Ovary (tissue), 10 donors: ENCODE measurements at regions of chr12 and their contacts with region 1.

Region 1: DNA sequence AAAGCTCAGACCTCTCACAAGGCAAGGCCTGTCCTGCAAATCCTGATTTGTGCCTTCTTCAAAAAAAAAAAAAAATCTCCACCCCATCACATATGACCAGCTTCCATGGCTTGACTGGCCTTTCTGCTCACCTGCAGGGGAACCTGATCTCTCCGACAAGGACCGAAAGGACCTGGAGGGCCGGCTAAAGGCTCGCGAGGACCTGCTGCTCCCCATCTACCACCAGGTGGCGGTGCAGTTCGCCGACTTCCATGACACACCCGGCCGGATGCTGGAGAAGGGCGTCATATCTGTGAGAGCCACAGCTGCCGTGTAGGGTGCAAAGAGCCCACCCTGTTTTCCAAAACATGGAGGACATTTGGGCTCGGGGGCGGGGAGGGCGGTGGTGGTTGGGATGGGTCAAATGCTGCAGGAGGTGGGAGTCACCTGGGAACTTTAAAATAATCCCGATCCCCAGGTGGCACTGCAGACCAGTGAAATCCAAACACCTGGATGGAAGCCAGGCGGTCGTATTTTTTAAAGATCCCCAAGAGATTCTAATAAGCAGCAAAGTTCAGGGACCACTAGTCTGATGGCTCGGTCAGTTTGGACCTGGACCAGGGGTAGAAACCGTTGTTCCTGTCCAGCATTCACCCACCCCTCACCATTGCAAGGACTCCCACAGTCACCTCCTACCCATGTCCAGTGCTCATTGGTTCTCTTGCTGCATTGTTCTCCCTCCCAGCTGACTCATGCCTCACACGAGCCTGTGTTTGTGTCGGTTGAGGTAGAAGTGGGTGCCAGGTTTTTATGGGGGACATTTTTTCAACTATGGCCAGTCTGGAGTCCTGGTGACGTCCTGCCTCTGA is 44.8 kb downstream of the FOXN4 start:
- DNase-seq: peak; percentile 62 to 87 (median 77)
- H3K4me3 ChIP-seq: no peak overlapping the region
- H3K27ac ChIP-seq: no peak overlapping the region
- H3K4me1 ChIP-seq: no peaks in the 10 kb centered on the region
- H3K27me3 ChIP-seq: no peaks in the 10 kb centered on the region
- CTCF ChIP-seq: peak in 2 of 3 donors; percentile 51 to 65
- EP300 ChIP-seq: no peak
- POLR2A ChIP-seq: no peak

Region 2: DNA sequence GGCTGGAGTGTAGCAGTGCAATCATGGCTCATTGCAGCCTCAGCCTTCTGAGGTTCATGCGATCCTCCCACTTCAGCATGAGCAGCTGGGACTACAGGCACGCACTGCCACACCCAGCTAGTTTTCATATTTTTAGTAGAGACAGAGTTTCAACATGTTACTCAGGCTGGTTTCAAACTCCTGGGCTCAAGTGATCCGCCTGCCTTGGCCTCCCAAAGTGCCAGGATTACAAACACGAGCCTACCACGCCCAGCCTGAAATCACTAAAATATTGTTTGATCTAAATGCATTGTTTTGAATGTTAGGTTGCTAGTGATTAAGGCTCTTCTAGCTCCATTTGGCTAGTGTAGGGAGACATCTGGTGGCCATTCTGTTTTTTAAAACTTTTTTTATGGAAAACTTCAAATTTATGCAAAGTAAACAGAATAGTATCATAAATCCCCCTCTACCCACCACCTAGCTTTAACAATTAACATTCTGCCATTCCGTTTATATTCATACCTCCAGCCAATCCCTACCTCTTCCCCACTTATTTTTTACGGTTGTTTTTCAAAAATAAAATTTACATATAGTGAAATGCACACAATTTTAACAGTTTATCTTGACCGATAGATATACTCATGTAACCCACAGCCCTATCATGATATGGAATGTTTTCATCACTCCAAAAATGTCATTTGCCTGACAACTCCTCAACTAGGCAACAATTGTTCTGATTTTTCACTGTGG is 121.2 kb after region 1 on chr12:
- intact Hi-C with region 1: loop called (anchors 5 kb)
- DNase-seq: peak in 3 of 5 donors; percentile 19 to 54 (median 26)
- H3K4me3 ChIP-seq: no peak overlapping the region
- H3K27ac ChIP-seq: no peak overlapping the region
- H3K4me1 ChIP-seq: peaks cover 3% of the 10 kb centered on the region
- H3K27me3 ChIP-seq: no peaks in the 10 kb centered on the region
- CTCF ChIP-seq: peak in 2 of 3 donors; percentile 55 to 62
- EP300 ChIP-seq: no peak
- POLR2A ChIP-seq: no peak

Region 3: DNA sequence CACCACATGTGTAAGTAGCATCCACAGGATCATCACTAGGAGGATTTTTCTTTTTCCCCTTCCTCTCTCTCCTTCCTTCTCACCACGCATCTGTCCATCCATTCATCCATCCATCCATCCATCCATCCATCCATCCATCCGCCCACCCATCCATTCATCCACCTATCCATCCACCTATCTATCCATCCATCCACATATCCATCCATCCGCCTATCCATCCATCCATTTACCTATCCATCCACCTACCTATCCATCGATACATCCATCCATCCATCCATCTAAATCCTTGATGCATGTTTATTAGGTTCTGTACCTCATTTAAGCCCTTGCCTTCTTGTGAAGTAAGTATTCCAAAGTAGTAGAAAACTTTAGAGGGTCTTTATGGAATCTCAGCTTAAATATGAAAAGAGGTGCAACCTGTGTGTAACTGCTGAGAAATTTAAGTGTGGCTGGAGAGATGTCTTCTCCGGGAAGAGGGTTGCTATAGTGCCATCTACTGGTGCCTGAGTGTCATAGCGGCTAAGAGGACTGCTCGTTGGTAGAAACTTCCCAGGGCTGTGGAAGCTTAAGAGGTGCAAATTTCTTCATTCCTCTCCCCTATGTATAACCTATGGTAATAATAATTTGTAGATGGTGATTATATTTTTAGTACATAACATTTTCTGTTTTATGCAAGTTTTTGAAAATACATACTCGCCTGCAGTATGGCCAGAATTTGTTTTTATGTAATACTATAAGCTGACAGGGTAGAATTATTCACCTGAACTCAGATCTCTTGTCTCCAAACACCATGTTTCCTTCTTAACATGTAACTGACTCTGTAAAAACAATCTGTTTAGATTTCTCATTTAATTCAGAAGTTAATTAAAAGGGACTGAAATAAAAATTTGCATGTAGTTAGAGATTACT is 129.4 kb after region 1 on chr12:
- intact Hi-C with region 1: loop called (anchors 5 kb)
- DNase-seq: peak in 3 of 5 donors; percentile 12 to 43 (median 18)
- H3K4me3 ChIP-seq: no peak overlapping the region
- H3K27ac ChIP-seq: no peak overlapping the region
- H3K4me1 ChIP-seq: no peaks in the 10 kb centered on the region
- H3K27me3 ChIP-seq: no peaks in the 10 kb centered on the region
- CTCF ChIP-seq: peak; percentile 37 to 45 (median 39)
- EP300 ChIP-seq: no peak
- POLR2A ChIP-seq: no peak